ENCODE measurements at regions of chr19 and their contacts with region 1.

Region 1: DNA sequence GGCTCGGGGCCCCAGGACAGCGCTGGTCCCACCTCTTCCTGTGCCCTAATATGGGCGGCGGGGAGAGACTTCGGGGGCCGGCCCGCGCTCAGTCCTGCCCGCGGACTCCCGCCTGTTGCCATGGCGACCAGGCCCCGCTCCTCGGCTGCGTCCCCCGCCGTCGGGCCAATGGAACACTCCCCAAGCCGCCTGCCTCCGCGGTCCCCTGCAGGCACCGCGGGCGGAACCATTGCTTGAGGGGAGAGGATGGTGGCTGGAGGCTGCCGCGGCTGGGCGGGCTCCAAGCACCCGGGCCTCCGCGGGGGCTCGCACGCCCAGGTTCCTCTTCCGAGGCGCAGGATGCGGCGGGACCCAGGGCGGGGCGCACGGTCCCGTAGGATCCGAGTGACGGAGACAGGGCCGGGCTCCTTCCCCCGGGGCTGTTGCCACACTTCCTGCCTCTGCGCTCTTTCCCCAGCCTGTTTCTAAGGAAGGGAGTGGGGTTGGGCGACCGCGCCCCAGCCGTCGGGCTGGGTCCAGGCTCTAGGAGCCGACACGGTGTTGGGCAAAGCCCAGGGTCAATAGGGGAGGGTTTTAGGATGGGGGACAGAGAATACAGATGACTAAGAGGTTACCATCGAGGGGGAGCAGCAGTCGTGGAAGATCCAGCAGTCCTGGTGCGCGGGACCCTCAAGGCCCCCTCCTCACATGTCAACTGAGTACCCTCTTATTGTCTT is 1.2 kb upstream of the JUNB start:
- H3K4me3 Mint-ChIP-seq: peak overlapping the region; percentile 95
- H3K27ac Mint-ChIP-seq: no peak overlapping the region
- H3K4me1 Mint-ChIP-seq: peaks cover 43% of the 10 kb centered on the region
- H3K27me3 Mint-ChIP-seq: no peaks in the 10 kb centered on the region

Region 2: DNA sequence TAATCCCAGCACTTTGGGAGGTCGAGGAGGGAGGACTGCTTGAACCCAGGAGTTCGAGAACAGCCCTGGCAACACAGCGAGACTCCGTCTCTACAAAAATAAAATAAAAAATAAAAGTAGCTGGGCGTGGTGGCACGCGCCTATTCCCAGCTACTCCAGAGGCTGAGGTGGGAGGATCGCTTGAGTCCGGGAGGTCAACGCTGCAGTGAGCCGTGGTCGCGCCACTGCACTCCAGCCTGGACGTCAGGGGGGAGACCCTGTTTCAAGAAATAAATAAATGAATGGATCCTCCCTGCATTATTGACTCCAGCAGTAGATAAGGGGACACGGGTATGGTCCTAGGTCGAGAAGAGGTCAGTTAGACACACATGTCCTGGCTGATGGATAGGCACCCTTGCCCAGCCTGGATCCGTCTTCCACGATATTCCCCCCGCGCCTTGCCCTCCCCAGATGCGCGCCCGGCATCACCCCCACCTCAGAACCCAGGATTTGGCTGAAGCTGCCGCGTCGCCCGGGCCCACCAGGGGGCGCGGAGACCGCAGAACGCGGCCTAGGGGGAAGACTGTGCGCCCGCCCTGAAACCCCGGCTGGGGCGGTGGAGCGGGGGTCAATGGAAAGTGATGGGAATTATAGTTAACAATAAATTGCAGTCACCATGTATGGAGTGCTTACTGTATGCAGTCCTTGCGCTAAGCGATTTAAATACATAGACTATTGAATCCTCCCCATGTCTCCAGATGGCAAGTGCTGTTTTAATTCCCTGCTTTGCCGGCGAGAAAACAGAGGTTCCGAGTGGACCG is 12.6 kb before region 1 on chr19:
- intact Hi-C with region 1: loop called (anchors 1 kb)
- H3K4me3 Mint-ChIP-seq: peak overlapping the region; percentile 83
- H3K27ac Mint-ChIP-seq: peak overlapping the region; percentile 91
- H3K4me1 Mint-ChIP-seq: peaks cover 57% of the 10 kb centered on the region
- H3K27me3 Mint-ChIP-seq: no peaks in the 10 kb centered on the region

Region 3: GRCh38 chr19:12867120-12868099 is 77.3 kb after region 1 on chr19:
- intact Hi-C with region 1: no loop called
- H3K4me3 Mint-ChIP-seq: peak overlapping the region; percentile 65
- H3K27ac Mint-ChIP-seq: peak overlapping the region; percentile 41
- H3K4me1 Mint-ChIP-seq: peaks cover 19% of the 10 kb centered on the region
- H3K27me3 Mint-ChIP-seq: peaks cover 17% of the 10 kb centered on the region